ENCODE measurements at regions of chr1 and their contacts with region 1.

Region 1: GRCh38 chr1:186375088-186375953 is at the starts of genes ODR4 and TPR:
- DNase-seq: peak; percentile 96
- ATAC-seq: peak; percentile 92
- H3K4me3 ChIP-seq: peak within 1 kb of the TSS; percentile 83
- H3K27ac ChIP-seq: peak within 1 kb of the TSS; percentile 93
- H3K4me1 ChIP-seq: no peaks in the 10 kb centered on the region; the same call in 1 of the 2 replicates
- H3K27me3 ChIP-seq: no peaks in the 10 kb centered on the region
- CTCF ChIP-seq: peak; percentile 83 to 99 (median 98)
- EP300 ChIP-seq: 0 out of 4 replicates have a peak, but pooled peaks have one; percentile 11 to 35
- POLR2A ChIP-seq: peak; percentile 81
- RAD21 ChIP-seq: peak; percentile 48
- polyA plus RNA-seq, gene ODR4: 12.6 to 15.4 TPM
- polyA plus RNA-seq, gene TPR: 30.9 to 37.2 TPM

Region 2: GRCh38 chr1:184743062-184743756 is 1632.1 kb before region 1 on chr1:
- CTCF ChIA-PET with region 1: no interaction called
- POLR2A ChIA-PET with region 1: no interaction called
- RAD21 ChIA-PET with region 1: no interaction called
- SMC1A ChIA-PET with region 1: no interaction called
- in situ Hi-C with region 1: loop called (anchors 25 kb)
- intact Hi-C with region 1: no loop called
- DNase-seq: peak; percentile 57
- ATAC-seq: peak; percentile 74
- H3K4me3 ChIP-seq: 0 out of 2 replicates have a peak overlapping the region, but pooled peaks have one; percentile 35
- H3K27ac ChIP-seq: peak overlapping the region; percentile 71
- H3K4me1 ChIP-seq: peaks cover 35% of the 10 kb centered on the region
- H3K27me3 ChIP-seq: no peaks in the 10 kb centered on the region
- CTCF ChIP-seq: no peak
- EP300 ChIP-seq: peak; percentile 85 to 87
- POLR2A ChIP-seq: no peak
- RAD21 ChIP-seq: no peak

Region 3: GRCh38 chr1:186363891-186364290 is 11.4 kb before region 1 on chr1:
- CTCF ChIA-PET with region 1: interaction called, 6 read pairs
- POLR2A ChIA-PET with region 1: interaction called, 4 read pairs
- RAD21 ChIA-PET with region 1: interaction called, 3 read pairs
- SMC1A ChIA-PET with region 1: interaction called, 10 read pairs
- in situ Hi-C with region 1: no loop called
- intact Hi-C with region 1: no loop called
- DNase-seq: no peak
- ATAC-seq: no peak
- H3K4me3 ChIP-seq: no peak overlapping the region
- H3K27ac ChIP-seq: no peak overlapping the region
- H3K4me1 ChIP-seq: no peaks in the 10 kb centered on the region; the same call in 1 of the 2 replicates
- H3K27me3 ChIP-seq: no peaks in the 10 kb centered on the region
- CTCF ChIP-seq: no peak
- EP300 ChIP-seq: no peak
- POLR2A ChIP-seq: no peak
- RAD21 ChIP-seq: no peak

Region 4: DNA sequence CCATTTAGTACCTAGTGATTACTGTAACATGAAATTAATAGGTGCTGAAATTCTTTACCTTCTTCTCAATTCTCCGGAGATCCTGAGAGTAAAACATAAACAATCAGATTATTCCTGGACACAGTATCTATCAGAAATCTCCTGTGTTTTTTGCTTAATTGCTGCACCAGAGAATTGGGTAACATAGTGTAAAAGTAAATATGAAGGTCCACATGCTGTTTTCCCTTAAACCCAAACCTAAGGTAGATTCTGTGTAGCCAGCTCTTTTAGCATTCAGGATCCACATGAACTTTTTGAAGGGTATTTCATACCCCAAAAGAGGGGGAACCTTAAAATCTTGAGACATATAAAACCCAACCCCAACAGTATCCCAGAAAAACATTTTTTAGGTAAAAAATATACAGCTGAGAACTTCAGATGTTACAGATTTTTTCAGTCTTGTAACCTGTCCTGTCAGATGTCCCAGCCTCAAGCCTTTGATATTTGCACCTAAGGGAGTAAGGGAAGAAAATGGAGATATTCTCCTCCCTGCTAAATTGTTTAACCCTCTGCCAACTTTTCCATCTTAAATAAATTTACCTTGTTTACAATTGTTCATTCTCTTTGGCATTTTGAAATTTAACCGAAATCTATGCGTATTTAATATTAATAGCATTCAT is 11.5 kb after region 1 on chr1:
- CTCF ChIA-PET with region 1: interaction called, 10 read pairs
- POLR2A ChIA-PET with region 1: interaction called, 4 read pairs
- RAD21 ChIA-PET with region 1: interaction called, 5 read pairs
- SMC1A ChIA-PET with region 1: interaction called, 6 read pairs
- in situ Hi-C with region 1: no loop called
- intact Hi-C with region 1: no loop called
- DNase-seq: no peak
- ATAC-seq: no peak
- H3K4me3 ChIP-seq: no peak overlapping the region
- H3K27ac ChIP-seq: no peak overlapping the region
- H3K4me1 ChIP-seq: no peaks in the 10 kb centered on the region
- H3K27me3 ChIP-seq: no peaks in the 10 kb centered on the region
- CTCF ChIP-seq: no peak
- EP300 ChIP-seq: no peak
- POLR2A ChIP-seq: no peak
- RAD21 ChIP-seq: no peak